Activated CD4-positive, alpha-beta T cell treated with anti-CD3 and anti-CD28 coated beads for 36 hours (primary cell): ENCODE measurements at regions of chrX and their contacts with region 1.

Region 1: DNA sequence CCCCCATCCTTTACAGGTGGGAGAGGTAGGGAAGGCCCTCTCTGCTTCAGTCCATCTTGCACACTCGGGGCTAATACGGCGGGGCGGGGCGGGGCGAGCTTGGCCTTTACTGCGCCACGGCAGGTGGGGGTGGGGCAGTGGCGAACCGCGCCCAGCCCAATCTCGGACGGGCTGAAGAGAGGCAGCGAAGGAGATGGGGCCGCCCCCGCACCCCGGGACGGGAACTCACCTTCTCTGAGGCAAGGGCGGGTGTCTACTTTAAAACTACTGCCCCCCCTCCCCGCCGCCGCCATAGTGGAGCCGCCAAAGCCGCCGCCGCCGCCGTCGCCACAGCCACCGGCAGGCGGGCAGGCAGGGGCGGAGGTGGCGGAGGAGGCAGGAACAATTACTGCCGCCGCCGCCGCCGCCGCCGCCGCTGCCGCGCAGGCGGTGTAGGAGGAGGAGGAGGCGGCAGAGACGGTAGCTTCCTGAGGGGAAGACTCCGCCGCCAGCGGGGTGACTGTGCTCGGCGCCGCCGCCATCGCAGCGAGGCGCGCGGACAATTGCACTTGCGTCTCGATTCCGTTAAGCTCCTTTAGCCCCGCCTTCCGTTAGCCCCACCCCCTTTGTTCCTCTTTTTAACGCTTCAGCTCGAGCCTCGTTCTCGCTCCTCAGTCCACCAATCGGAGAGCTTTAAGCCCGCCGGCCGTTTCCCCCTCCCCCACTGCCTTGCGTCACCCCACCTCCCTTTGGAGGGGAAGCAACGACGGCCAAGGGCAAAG is at the start of gene ZMAT1:
- DNase-seq: peak; percentile 95
- ATAC-seq: peak; percentile 97
- H3K4me3 Mint-ChIP-seq: peak within 1 kb of the TSS; percentile 87
- H3K27ac Mint-ChIP-seq: peak within 1 kb of the TSS; percentile 92
- H3K4me1 Mint-ChIP-seq: peaks cover 10% of the 10 kb centered on the region
- H3K27me3 Mint-ChIP-seq: no peaks in the 10 kb centered on the region
- total RNA-seq, gene ZMAT1: 4.4 to 5.4 TPM

Region 2: DNA sequence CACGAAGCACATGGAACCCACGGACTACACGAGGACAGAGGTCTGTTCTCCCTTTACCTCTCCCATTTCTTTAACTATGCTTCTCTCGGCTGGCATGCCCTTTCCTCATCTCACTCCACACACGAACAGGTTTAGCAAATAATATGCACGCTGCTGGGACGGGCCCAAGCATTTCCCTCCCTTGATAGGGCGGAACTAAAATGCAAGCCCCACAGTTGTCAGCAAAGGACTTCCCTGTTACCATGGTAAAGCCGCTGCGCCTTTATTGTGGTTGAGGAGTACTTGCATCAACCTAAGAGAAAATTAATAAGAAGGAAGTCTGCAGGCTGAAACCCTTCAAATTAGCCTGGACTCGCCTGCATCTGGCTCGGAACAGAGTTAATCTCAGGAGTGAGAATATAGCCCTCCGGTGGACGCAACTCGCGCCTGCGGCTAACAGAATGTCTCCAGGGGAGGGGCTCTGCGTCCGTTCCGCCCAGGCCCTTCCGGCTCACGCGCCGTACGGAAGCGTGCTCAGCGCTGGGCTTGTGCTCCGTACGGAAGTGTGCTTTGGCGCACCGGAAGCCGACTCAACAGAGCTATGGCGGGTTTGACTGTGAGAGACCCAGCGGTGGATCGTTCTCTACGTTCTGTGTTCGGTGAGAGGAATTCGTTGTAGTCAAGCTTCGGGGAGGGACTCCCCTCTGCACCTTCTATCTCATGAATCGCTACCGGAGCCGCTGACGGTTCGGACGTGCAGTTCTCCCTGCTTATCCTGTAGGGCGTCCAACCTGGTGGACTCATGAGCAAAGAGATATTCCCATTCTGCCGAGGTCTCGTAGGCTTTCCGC is 1111.6 kb before region 1 on chrX and contains the start of gene CSTF2:
- CTCF ChIA-PET with region 1: no interaction called
- POLR2A ChIA-PET with region 1: no interaction called
- intact Hi-C with region 1: loop called in 1 of 2 experiments (anchors 2 kb)
- DNase-seq: peak; percentile 89
- ATAC-seq: peak; percentile 98
- H3K4me3 Mint-ChIP-seq: peak within 1 kb of the TSS; percentile 93
- H3K27ac Mint-ChIP-seq: peak within 1 kb of the TSS; percentile 99
- H3K4me1 Mint-ChIP-seq: peaks cover 8% of the 10 kb centered on the region
- H3K27me3 Mint-ChIP-seq: peaks cover 2% of the 10 kb centered on the region
- total RNA-seq, gene CSTF2: 53.8 to 54.3 TPM

Region 3: GRCh38 chrX:101348452-101349192 is 583.0 kb before region 1 on chrX and contains the start of gene TIMM8A:
- CTCF ChIA-PET with region 1: no interaction called
- POLR2A ChIA-PET with region 1: no interaction called
- intact Hi-C with region 1: loop called in 1 of 2 experiments (anchors 5 kb)
- DNase-seq: peak; percentile 88
- ATAC-seq: peak; percentile 98
- H3K4me3 Mint-ChIP-seq: peak within 1 kb of the TSS; percentile 85
- H3K27ac Mint-ChIP-seq: peak within 1 kb of the TSS; percentile 93
- H3K4me1 Mint-ChIP-seq: peaks cover 9% of the 10 kb centered on the region
- H3K27me3 Mint-ChIP-seq: no peaks in the 10 kb centered on the region
- total RNA-seq, gene TIMM8A: 12.8 to 23.8 TPM

Region 4: GRCh38 chrX:101390664-101391525 is 540.8 kb before region 1 on chrX and contains the start of gene RPL36A:
- CTCF ChIA-PET with region 1: interaction called, 4 read pairs
- POLR2A ChIA-PET with region 1: no interaction called
- intact Hi-C with region 1: loop called in 1 of 2 experiments (anchors 5 kb)
- DNase-seq: peak; percentile 90
- ATAC-seq: peak; percentile 97
- H3K4me3 Mint-ChIP-seq: peak within 1 kb of the TSS; percentile 95
- H3K27ac Mint-ChIP-seq: peak within 1 kb of the TSS; percentile 96
- H3K4me1 Mint-ChIP-seq: peaks cover 6% of the 10 kb centered on the region
- H3K27me3 Mint-ChIP-seq: peaks cover 3% of the 10 kb centered on the region
- total RNA-seq, gene RPL36A: 340 to 709 TPM

Region 5: DNA sequence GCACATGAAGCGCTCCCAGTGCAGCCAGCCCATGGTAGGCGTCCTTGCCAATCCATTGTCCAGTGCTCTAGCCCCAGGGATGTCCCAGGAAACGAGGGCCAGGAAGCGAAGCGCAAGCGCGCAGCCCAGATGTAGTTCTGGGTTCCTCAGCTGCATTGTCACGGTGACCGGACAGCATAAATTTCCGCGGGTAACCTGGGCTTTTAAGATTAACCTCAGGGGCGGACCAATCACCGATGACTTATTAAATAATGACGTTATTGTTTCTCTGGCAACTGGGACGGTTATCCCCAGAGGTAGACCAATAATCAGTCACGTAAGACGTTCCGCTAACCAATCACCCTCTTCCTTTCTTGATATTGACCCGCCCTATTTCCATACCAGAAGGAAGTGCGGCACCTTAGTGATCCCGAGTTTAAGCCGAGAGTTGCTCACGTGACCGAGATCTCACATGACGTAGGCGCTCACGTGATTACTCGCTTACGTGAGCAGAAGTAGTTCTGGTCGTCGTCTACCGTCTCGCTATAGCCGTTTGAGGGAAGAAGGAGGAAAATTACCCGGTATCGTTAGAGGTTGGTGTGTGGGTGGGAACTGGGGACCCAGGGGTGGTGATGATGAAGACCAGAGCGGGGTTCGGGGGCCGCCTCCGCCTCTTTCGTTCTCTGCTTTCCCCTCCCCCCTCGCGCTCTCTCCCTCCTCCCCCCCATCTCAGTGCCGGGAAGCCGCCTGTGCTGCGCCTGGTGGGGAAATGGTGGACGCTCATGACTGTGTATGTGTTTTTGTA is 523.7 kb before region 1 on chrX and contains the starts of genes GLA and HNRNPH2:
- CTCF ChIA-PET with region 1: no interaction called
- POLR2A ChIA-PET with region 1: no interaction called
- intact Hi-C with region 1: loop called (anchors 2 to 5 kb)
- DNase-seq: peak; percentile 91
- ATAC-seq: peak; percentile 94
- H3K4me3 Mint-ChIP-seq: peak within 1 kb of the TSS; percentile 97
- H3K27ac Mint-ChIP-seq: peak within 1 kb of the TSS; percentile 97
- H3K4me1 Mint-ChIP-seq: peaks cover 26% of the 10 kb centered on the region
- H3K27me3 Mint-ChIP-seq: no peaks in the 10 kb centered on the region
- total RNA-seq, gene GLA: 32.6 to 42.2 TPM
- total RNA-seq, gene HNRNPH2: 18.6 to 26.9 TPM

Region 6: GRCh38 chrX:101759000-101759399 is 172.7 kb before region 1 on chrX:
- CTCF ChIA-PET with region 1: no interaction called
- POLR2A ChIA-PET with region 1: no interaction called
- intact Hi-C with region 1: no loop called
- DNase-seq: peak; percentile 37
- ATAC-seq: peak; percentile 74
- H3K4me3 Mint-ChIP-seq: no peak overlapping the region
- H3K27ac Mint-ChIP-seq: no peak overlapping the region
- H3K4me1 Mint-ChIP-seq: peaks cover 3% of the 10 kb centered on the region
- H3K27me3 Mint-ChIP-seq: peaks cover 4% of the 10 kb centered on the region

Region 7: DNA sequence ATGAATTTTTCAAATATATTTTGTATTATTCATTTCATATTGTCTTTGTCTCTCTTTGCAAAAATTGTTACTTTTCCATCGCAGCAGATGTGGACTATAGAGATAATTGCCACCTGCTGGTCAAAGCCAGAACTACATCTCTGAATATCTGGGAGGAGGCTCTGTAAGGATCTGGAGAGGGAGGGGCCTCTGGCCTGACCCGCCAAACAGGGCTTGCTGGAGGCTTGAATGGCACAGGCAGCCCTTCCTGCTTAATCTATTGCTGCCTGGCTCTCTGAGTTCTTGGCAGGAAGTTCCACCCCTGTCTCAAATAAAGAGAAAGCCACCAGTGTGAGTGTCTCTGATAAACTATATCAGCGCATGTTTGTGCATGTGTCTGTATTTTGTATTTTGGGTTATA is 132.3 kb before region 1 on chrX:
- CTCF ChIA-PET with region 1: no interaction called
- POLR2A ChIA-PET with region 1: no interaction called
- intact Hi-C with region 1: loop called in 1 of 2 experiments (anchors 5 kb)
- DNase-seq: peak; percentile 85
- ATAC-seq: peak; percentile 100
- H3K4me3 Mint-ChIP-seq: peak overlapping the region; percentile 63
- H3K27ac Mint-ChIP-seq: no peak overlapping the region
- H3K4me1 Mint-ChIP-seq: peaks cover 7% of the 10 kb centered on the region
- H3K27me3 Mint-ChIP-seq: no peaks in the 10 kb centered on the region

Region 8: GRCh38 chrX:102155806-102156179 is 224.1 kb after region 1 on chrX and contains the start of gene BEX5:
- CTCF ChIA-PET with region 1: no interaction called
- POLR2A ChIA-PET with region 1: no interaction called
- intact Hi-C with region 1: loop called in 1 of 2 experiments (anchors 5 kb)
- DNase-seq: peak; percentile 75
- ATAC-seq: peak; percentile 97
- H3K4me3 Mint-ChIP-seq: peak within 1 kb of the TSS; percentile 85
- H3K27ac Mint-ChIP-seq: peak within 1 kb of the TSS; percentile 90
- H3K4me1 Mint-ChIP-seq: peaks cover 11% of the 10 kb centered on the region
- H3K27me3 Mint-ChIP-seq: peaks cover 5% of the 10 kb centered on the region
- total RNA-seq, gene BEX5: 2.1 to 2.3 TPM